ENCODE measurements at regions of chr5 and their contacts with region 1.

Region 1: DNA sequence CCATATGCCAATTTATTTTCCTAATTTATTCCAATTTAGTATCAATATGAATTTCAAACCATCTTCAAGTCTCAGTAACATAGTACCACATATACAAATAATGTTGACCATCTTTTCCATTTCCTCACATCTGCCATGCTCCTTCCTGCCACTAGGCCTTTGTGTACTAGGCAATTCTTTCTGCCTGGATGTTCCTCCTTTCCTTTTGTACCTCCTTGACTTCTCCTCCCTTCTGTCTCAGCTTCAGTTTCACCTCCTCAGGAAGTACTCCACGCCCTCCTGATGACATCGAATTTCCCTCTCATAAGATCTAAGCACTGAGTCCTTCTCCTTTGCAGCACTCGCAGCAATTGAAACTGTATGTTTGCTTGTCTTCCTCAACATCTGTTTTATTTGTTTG is 53.9 kb downstream of the MEF2C start:
- DNase-seq: peak; percentile 53 to 69 (median 60)
- H3K4me3 ChIP-seq: peak overlapping the region in 2 of 7 experiments; percentile 10 to 49
- H3K27ac ChIP-seq: peak overlapping the region; percentile 44 to 96
- H3K4me1 ChIP-seq: peaks cover 55 to 95% (median 81%) of the 10 kb centered on the region in 4 experiments
- H3K27me3 ChIP-seq: no peaks in the 10 kb centered on the region

Region 2: GRCh38 chr5:88407341-88407740 is 421.7 kb before region 1 on chr5:
- CTCF ChIA-PET with region 1: no interaction called
- POLR2A ChIA-PET with region 1: no interaction called
- DNase-seq: no peak
- H3K4me3 ChIP-seq: no peak overlapping the region
- H3K27ac ChIP-seq: no peak overlapping the region
- H3K4me1 ChIP-seq: no peaks in the 10 kb centered on the region
- H3K27me3 ChIP-seq: no peaks in the 10 kb centered on the region

Region 3: DNA sequence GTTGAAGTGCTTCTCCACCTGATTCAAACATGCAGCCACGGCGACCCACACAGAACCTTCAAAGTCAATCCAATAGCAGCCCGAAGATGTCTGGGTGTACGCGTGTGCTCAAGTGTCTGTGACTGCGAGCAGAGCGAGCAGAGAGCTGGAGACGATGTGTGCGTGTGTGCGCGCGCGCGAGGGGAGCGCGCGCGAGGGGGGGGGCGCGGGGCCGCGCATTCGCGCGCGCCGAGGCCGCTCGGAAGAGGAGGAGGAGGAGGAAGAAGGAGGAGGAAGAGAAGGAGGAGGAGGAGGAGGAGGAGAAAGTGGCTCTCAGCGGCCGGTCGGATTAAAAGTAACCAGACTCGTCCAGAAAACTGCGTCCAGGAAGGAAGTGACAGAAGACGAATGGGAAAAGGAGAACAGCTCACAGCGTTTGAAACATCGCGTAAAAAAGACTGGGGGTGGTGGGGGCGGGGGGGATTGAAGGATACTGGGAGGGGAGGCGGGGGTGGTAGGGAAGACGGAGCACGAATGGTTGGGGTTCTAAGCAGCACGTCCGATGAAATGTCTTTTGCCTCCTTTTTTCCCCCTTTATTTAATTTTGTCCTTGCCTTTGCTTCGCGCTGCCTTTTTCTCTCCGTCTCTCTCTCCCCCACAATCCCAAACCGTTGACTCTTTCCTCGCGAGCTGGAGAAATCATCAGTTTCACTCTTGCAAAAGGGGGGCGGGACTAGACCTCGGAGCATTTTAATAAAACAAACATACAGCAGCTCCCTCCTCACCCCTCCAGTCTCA is 54.2 kb after region 1 on chr5 and contains the start of gene MEF2C:
- CTCF ChIA-PET with region 1: interaction called, 14 read pairs
- POLR2A ChIA-PET with region 1: interaction called, 5 read pairs
- DNase-seq: peak; percentile 88 to 94 (median 93)
- H3K4me3 ChIP-seq: peak within 1 kb of the TSS; percentile 64 to 100 (median 98)
- H3K27ac ChIP-seq: peak within 1 kb of the TSS; percentile 94 to 95
- H3K4me1 ChIP-seq: peaks cover 11 to 60% (median 48%) of the 10 kb centered on the region in 4 experiments
- H3K27me3 ChIP-seq: no peaks in the 10 kb centered on the region

Measured in common myeloid progenitor, CD34-positive (primary cell).